Activated T-helper 2 cell treated with anti-CD3 and anti-CD28 coated beads, Interferon-gamma antibody, Interleukin-2, Interleukin-4, amounts not matched to agents 10 μg/mL and 5 μg/mL and 100 μg/mL, durations not matched to agents 14 hours and 24 hours and 36 hours (primary cell): ENCODE measurements at regions of chr10 and their contacts with region 1.

Region 1: DNA sequence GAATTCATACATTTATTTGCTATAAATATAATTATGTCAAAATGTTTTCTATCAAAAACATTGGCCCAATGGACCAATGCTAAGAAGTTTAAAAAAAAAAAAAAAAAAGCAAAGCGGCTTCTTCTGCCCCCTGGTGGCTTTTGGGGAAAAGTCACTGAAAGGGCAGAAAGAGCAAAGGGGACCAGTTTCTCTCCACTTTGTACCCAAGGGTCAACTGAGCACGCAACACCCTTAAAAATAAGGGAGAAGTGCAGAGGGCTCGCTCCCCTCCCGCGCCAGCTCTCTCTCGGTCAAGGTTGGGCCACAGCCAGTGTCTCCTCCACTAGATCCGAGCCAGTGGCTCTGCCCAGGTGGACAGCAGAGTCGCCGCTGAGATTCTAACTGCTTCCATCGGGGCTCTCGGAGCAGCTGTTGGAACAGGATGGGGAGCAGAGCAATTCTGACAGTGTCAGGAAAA is 136.4 kb upstream of the FGFR2 start:
- DNase-seq: no peak
- H3K4me3 Mint-ChIP-seq: no peak overlapping the region
- H3K27ac Mint-ChIP-seq: no peak overlapping the region
- H3K4me1 Mint-ChIP-seq: peaks cover 12% of the 10 kb centered on the region
- H3K27me3 Mint-ChIP-seq: peaks cover 32% of the 10 kb centered on the region

Region 2: DNA sequence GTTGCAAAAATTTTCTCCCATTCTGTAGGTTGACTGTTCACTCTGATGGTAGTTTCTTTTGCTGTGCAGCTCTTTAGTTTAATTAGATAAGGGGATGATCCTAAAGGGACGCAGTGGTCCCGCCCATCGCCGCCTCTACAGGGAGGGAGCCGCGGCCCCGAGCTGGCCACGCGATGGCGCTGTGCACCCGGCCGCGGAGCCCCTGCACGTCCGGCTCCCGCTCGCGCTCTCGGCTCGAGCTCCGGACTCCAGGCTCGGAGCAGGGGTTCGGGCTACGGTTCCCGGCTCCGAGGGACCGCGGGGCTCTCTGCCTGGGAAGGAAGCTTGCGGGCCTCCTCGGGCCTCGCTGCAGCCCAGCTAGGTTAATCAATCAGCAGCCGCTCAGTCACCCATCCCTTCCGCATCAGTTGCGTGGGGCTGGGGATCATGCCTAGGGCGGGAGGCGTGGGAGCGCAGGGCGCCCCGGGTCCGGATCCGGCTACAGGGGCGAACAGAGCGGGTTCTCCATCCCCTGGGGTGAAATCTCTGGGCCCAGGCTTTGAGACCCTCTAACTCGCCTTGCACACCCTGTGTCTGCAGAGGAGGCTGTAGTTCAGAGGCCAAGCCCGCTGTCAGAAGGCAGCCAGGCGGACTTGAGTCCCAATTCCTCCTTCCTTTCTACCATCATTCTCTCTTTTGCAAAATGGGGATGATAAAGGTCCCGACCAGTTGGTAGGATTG is 785.6 kb before region 1 on chr10:
- intact Hi-C with region 1: loop called (anchors 2 kb)
- DNase-seq: peak; percentile 50
- H3K4me3 Mint-ChIP-seq: peak overlapping the region; percentile 21
- H3K27ac Mint-ChIP-seq: no peak overlapping the region
- H3K4me1 Mint-ChIP-seq: peaks cover 4% of the 10 kb centered on the region
- H3K27me3 Mint-ChIP-seq: peaks cover 29% of the 10 kb centered on the region

Region 3: DNA sequence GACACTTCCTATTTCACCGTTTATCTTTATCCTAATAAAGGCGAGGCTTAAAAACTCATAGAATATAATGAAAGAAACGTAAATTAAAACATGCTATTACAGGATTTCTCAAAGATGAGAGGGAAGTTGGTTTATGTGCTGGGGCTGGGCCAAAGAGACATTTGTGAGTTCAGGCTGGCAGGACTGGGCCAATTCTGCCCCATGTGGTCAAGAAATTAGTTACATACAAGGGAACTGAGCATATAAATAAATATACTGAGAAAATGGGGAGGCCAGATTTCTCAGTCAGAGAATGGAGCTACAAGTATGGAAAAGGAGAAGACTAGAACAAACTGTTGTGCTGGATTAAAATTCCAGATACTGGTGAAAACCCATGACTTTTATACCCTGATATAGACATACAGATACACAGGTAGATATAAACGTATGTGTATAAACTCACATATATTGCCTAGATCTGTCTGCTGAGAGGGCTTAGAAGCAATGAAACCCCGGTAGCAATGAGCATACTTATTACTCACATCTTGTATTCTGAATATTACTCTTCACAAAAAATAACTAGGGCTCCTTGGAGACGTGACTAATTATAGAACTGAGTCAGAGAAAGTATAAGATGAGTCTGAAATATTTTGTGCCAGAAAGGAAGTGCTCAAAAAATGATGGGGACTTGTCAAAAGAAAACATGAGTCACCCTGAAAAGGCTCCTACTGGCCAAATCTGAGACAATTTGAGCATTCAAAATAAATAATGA is 19.3 kb after region 1 on chr10:
- intact Hi-C with region 1: loop called (anchors 2 kb)
- DNase-seq: no peak
- H3K4me3 Mint-ChIP-seq: no peak overlapping the region
- H3K27ac Mint-ChIP-seq: no peak overlapping the region
- H3K4me1 Mint-ChIP-seq: peaks cover 15% of the 10 kb centered on the region
- H3K27me3 Mint-ChIP-seq: peaks cover 3% of the 10 kb centered on the region

Region 4: DNA sequence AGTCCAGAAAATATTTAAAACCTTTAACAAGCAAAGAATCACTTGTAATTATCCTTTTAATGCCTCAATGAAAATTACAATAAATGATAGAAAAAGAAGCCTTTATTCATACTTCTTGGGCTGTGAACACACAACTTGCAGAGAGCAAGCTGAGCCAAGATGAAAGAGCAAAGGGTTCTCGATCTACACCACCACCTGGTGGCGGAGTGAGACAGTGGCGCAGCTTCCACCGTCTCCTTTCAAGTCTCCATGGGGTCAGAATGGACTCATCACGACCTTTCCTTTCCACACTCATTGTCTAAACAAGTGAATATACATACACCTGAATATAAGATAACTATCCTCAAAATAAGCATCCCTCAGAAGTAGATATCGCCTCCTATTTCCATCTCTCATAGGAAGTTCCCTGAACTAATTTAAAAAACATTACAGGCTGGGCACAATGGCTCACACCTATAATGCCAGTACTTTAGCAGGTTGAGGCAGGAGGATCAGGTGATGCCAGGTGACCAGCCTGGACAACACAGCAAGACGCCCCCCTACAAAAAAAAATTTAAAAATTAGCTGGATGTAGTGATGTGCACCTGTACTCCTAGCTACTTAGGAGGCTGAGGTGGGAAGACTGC is 152.5 kb after region 1 on chr10:
- intact Hi-C with region 1: loop called (anchors 1 kb)
- DNase-seq: peak; percentile 12
- H3K4me3 Mint-ChIP-seq: no peak overlapping the region
- H3K27ac Mint-ChIP-seq: no peak overlapping the region
- H3K4me1 Mint-ChIP-seq: peaks cover 4% of the 10 kb centered on the region
- H3K27me3 Mint-ChIP-seq: no peaks in the 10 kb centered on the region

Region 5: GRCh38 chr10:121900443-121901174 is 166.0 kb after region 1 on chr10:
- intact Hi-C with region 1: loop called (anchors 5 kb)
- DNase-seq: no peak
- H3K4me3 Mint-ChIP-seq: no peak overlapping the region
- H3K27ac Mint-ChIP-seq: no peak overlapping the region
- H3K4me1 Mint-ChIP-seq: no peaks in the 10 kb centered on the region
- H3K27me3 Mint-ChIP-seq: no peaks in the 10 kb centered on the region